Mammary epithelial cell (primary cell): ENCODE measurements at regions of chr6 and their contacts with region 1.

Region 1: DNA sequence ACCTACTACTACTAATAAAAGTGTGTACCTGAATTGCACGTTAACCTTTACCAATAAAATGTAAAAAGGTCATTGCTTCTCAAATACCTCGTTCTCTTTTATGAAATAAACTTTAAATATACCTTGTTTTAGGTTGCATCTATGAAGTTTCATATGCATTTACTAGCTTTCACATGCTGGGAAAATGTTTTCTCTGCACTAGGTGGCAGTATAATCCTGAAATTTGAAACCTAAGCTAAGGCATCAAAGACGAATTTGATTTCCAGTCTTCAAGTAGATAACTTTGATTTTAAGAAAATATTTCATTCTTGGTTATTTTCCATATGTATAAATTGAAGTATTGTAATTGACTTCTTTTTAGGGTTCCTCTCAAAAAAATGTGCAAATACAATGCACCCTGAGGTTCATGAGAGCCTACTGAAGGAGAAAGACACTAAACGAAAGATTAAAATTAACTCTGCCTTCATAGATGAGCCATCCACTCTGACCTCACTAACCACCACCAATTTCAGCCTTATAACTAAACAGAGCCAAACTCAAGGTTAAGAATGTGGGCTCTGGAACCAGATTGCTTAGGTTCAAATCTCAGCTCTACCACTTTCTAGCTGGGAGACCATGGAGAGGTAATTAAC is 7.3 kb upstream of the COL9A1 start:
- DNase-seq: peak; percentile 48
- H3K4me3 ChIP-seq: no peak overlapping the region
- H3K27ac ChIP-seq: no peak overlapping the region
- H3K4me1 ChIP-seq: no peaks in the 10 kb centered on the region
- H3K27me3 ChIP-seq: peaks cover 59% of the 10 kb centered on the region
- CTCF ChIP-seq: peak; percentile 60 to 66

Region 2: DNA sequence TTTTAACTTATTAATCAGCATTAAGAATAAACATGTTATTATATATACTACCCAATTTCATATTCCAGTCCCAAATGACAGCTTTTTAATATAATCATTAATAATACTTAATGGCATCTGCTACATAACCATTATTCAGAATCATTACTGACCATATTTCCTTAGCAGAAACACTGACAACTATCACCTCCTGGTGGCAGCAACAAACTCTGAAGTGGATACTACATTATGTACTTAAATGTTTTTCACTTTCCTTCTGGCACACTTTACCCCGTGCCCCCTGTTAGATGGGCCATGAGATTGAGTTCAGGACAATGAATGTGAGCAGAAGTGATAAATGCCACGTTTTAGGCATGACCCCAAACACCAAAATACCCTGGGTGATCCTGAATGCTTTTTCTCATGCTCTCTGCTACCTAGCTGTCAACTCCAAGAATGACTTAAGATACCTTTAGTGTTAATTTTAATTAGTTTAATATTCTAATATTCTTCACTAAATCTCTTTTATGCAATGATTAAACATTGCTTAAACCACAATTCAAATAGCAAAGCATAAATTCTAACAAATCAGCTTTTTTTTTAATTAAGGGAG is 590.5 kb before region 1 on chr6:
- CTCF ChIA-PET with region 1: no interaction called
- dilution Hi-C with region 1: no loop called
- in situ Hi-C with region 1: no loop called
- intact Hi-C with region 1: no loop called
- DNase-seq: peak; percentile 14
- H3K4me3 ChIP-seq: no peak overlapping the region
- H3K27ac ChIP-seq: no peak overlapping the region
- H3K4me1 ChIP-seq: no peaks in the 10 kb centered on the region
- H3K27me3 ChIP-seq: no peaks in the 10 kb centered on the region
- CTCF ChIP-seq: peak; percentile 38 to 55

Region 3: DNA sequence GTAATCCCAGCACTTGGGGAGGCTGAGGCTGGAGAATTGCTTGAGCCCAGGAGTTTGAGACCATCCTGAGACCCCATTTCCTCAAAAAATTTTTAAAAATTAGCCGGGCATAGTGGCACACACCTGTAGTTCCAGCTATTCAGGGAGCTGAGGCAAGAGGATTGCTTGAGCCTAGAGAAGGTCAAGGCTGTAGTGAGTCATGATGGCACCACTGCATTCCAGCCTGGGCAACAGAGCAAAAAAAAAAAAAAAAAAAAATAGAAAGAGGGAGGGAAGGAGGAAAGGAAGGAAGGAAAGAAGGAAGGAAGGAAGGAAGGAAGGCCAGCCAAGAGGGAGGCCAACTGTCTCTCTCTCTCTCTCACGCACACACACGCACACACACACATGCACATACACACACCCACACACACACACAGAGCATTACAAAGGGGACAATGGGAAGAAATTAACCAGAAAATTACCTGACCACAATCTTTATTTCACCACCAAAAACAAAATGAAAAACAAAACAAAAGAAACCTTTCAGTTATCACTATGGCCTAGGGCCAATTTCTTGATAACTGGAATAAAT is 43.2 kb after region 1 on chr6:
- CTCF ChIA-PET with region 1: no interaction called
- dilution Hi-C with region 1: no loop called
- in situ Hi-C with region 1: no loop called
- intact Hi-C with region 1: loop called (anchors 5 kb)
- DNase-seq: peak; percentile 34
- H3K4me3 ChIP-seq: no peak overlapping the region
- H3K27ac ChIP-seq: no peak overlapping the region
- H3K4me1 ChIP-seq: no peaks in the 10 kb centered on the region
- H3K27me3 ChIP-seq: peaks cover 29% of the 10 kb centered on the region
- CTCF ChIP-seq: no peak

Region 4: DNA sequence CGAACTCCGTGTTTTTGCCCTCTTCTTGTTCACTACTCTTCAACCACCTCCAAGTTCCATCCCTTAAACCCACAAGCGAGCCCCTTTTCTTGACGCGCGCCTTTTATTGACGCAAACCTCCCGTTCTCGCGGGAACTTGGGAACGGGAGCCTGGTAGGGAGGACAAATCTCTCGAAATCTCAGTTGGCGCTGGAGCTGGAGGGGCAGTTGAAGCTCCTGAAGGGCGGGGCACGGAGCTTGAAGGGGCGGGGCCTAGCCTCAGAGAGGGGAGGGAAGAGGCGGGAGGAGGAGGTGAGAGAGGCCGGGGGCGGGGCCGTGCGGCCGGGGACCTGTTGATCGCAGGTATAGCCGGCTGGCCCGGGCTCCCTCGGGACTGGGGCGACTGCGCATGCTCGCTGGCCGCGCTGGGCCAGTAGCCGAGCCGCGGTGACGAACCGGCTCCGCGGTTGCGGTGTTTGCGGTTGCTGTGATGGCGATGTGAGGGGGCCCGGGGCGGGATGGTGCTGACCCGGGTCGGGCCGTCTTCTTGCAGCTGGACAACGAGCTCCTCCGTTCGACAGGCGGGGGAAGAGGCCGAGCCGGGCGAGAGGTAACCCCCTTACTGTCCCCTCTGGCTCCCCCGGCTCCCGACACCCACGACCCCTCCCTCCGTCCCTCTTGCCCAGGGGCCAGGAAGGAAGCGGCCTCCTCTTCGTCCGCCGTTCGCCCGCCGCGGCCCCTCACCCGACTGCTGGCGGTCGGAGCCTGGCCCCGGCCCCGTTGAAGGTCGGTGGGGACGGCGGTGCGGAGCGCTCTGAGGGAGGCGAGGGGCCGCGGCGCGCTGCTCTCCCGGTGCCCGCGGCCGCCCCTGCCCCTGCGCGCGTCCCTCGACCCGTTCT is 103.2 kb after region 1 on chr6 and contains the start of gene FAM135A:
- CTCF ChIA-PET with region 1: interaction called, 20 read pairs
- dilution Hi-C with region 1: no loop called
- in situ Hi-C with region 1: no loop called
- intact Hi-C with region 1: loop called (anchors 5 kb)
- DNase-seq: peak; percentile 99
- H3K4me3 ChIP-seq: peak within 1 kb of the TSS; percentile 77 to 94 (median 79)
- H3K27ac ChIP-seq: peak within 1 kb of the TSS; percentile 83
- H3K4me1 ChIP-seq: peaks cover 7% of the 10 kb centered on the region
- H3K27me3 ChIP-seq: no peaks in the 10 kb centered on the region
- CTCF ChIP-seq: no peak
- total RNA-seq, gene FAM135A: 21.2 to 30.0 TPM

Region 5: GRCh38 chr6:70686548-70687133 is 376.5 kb after region 1 on chr6:
- CTCF ChIA-PET with region 1: interaction called, 12 read pairs
- dilution Hi-C with region 1: no loop called
- in situ Hi-C with region 1: loop called in 1 of 2 experiments (anchors 10 kb)
- intact Hi-C with region 1: loop called (anchors 2 kb)
- DNase-seq: peak; percentile 16
- H3K4me3 ChIP-seq: no peak overlapping the region
- H3K27ac ChIP-seq: no peak overlapping the region
- H3K4me1 ChIP-seq: no peaks in the 10 kb centered on the region
- H3K27me3 ChIP-seq: no peaks in the 10 kb centered on the region
- CTCF ChIP-seq: peak; percentile 55 to 75

Region 6: DNA sequence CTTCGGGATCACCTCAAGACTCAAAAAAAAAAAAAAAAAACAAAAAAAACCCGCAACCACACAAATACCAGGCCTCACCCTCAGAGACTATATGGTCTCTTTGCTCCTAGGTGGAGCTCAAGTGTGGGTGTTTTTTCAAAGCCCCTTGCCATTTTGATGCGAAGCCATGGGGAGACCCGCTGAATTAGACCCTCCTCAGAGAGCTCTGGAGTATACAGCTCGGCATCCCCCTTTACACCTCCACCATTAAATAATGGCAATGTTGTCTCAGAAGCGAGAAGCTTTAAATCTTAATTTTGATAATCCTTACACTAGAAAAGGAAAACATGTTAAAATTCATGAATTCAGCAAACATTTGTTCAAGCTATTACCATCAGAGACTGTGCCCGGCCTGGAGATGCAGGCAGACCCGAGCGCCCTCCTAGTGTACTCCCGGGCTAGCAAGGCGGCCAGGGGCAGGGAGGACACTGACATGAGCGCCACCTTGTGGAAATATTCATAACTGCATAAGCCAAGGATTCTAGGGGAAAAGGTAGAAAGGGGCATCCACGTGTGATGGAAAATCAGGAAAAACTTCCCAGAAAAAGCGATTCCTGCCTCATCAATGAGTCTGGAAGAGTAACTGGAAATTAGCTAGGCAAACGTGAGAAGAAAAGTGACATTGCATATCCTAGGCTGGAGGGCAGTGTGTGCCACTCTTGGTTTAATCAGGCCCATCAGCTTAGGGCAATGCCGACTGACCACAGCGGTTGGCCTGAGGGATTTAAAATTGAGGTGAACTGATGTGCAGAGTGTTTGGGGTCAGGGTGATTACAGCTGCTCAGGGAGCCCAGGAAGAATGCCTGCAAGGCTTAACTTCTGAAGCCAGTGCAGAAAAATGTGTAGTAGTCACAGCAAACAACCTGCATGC is 574.1 kb after region 1 on chr6:
- CTCF ChIA-PET with region 1: no interaction called
- dilution Hi-C with region 1: no loop called
- in situ Hi-C with region 1: loop called in 1 of 2 experiments (anchors 10 kb)
- intact Hi-C with region 1: loop called (anchors 1 kb)
- DNase-seq: peak; percentile 20
- H3K4me3 ChIP-seq: no peak overlapping the region
- H3K27ac ChIP-seq: no peak overlapping the region
- H3K4me1 ChIP-seq: no peaks in the 10 kb centered on the region
- H3K27me3 ChIP-seq: peaks cover 19% of the 10 kb centered on the region
- CTCF ChIP-seq: peak; percentile 75 to 87

Region 7: GRCh38 chr6:70955441-70956190 is 645.4 kb after region 1 on chr6:
- CTCF ChIA-PET with region 1: interaction called, 4 read pairs
- dilution Hi-C with region 1: no loop called
- in situ Hi-C with region 1: no loop called
- intact Hi-C with region 1: loop called (anchors 5 kb)
- DNase-seq: peak; percentile 66
- H3K4me3 ChIP-seq: peak overlapping the region; percentile 26 to 46 (median 37)
- H3K27ac ChIP-seq: no peak overlapping the region
- H3K4me1 ChIP-seq: peaks cover 17% of the 10 kb centered on the region
- H3K27me3 ChIP-seq: peaks cover 22% of the 10 kb centered on the region
- CTCF ChIP-seq: peak; percentile 61 to 88

Region 8: DNA sequence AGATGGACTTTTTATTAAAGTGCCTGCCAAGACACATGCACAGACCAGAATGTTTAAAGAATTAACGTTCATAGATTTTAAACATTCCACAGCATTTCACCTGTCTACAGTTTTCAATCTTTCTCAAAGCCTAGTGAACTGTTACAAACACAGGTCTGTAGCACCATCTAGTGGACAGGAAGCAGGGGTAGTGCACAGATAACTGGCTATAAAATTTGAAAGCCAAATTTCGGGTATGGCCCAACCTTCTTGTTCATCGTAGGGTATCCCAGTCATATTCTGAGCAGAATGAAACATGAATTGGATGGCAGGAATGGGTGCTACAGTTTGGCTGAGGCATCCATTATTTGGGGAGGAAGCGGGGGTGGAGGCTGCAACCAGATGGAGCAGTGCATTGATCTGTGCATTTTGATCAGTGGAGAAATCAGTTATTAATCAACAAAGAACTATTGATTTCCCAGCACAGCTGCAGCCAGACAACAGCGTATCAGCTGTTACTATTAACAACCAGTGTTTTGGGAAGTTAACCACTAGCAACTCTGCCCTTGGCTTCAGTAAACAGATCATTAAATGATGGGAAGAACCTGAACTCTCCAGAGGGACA is 702.8 kb after region 1 on chr6:
- CTCF ChIA-PET with region 1: no interaction called
- dilution Hi-C with region 1: no loop called
- in situ Hi-C with region 1: no loop called
- intact Hi-C with region 1: loop called (anchors 1 kb)
- DNase-seq: peak; percentile 50
- H3K4me3 ChIP-seq: no peak overlapping the region
- H3K27ac ChIP-seq: no peak overlapping the region
- H3K4me1 ChIP-seq: no peaks in the 10 kb centered on the region
- H3K27me3 ChIP-seq: peaks cover 4% of the 10 kb centered on the region
- CTCF ChIP-seq: peak; percentile 86